Activated CD4-positive, alpha-beta T cell treated with anti-CD3 and anti-CD28 coated beads for 36 hours (primary cell): ENCODE measurements at regions of chr10 and their contacts with region 1.

Region 1: GRCh38 chr10:91163269-91163868 is 57.1 kb upstream of the PCGF5 start:
- DNase-seq: peak; percentile 83
- ATAC-seq: peak; percentile 62
- H3K4me3 Mint-ChIP-seq: peak overlapping the region; percentile 81
- H3K27ac Mint-ChIP-seq: peak overlapping the region; percentile 91
- H3K4me1 Mint-ChIP-seq: peaks cover 34% of the 10 kb centered on the region
- H3K27me3 Mint-ChIP-seq: no peaks in the 10 kb centered on the region

Region 2: DNA sequence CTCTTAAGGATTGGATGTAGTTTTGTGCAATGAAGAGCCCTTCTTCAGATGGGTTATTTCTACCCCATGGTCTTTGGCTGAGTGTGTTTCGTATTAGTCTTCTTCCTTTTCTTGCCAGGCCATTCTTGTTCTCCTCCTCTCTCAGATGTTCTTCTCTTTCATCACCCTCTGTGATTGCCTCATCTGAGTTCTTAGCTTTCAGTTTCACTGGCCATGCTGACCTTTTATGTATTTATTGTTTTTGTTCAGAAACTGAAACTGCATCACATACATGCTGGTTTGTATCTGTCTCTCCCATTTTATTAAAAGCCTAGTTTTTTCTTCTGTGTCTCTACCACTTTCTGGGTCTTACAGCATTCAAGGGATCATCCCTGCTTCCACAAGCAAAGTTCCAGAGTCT is 35.4 kb after region 1 on chr10:
- CTCF ChIA-PET with region 1: interaction called, 5 read pairs
- POLR2A ChIA-PET with region 1: interaction called, 6 read pairs
- intact Hi-C with region 1: loop called (anchors 1 to 2 kb)
- DNase-seq: peak; percentile 19
- ATAC-seq: peak; percentile 30
- H3K4me3 Mint-ChIP-seq: no peak overlapping the region
- H3K27ac Mint-ChIP-seq: peak overlapping the region; percentile 82
- H3K4me1 Mint-ChIP-seq: peaks cover 82% of the 10 kb centered on the region
- H3K27me3 Mint-ChIP-seq: no peaks in the 10 kb centered on the region